AG04450 (cell line): ENCODE measurements at regions of chr1 and their contacts with region 1.

Region 1: DNA sequence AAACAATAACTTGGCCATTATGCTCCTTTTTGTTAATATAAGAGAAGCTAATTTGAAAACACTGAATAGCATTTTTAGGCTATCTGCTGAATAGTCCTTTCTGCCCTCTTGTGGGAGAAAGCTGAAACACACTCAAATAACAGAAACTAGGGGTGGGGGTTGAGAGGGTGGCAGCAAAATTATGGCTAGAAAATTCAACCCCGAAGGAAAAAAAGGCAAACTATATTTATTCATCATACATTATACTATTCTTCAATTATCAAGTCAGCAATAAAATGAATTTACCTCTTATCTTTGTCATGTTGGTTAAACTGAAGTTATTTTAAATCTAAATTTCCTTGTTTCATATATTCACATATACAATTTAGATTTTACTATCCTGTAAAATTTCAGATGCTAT is 255.9 kb downstream of the FAF1 start:
- DNase-seq: peak; percentile 6
- H3K4me3 ChIP-seq: no peak overlapping the region
- H3K27ac ChIP-seq: no peak overlapping the region
- H3K27me3 ChIP-seq: no peaks in the 10 kb centered on the region
- CTCF ChIP-seq: peak; percentile 88

Region 2: GRCh38 chr1:50368179-50369012 is 335.7 kb before region 1 on chr1:
- CTCF ChIA-PET with region 1: interaction called, 32 read pairs
- POLR2A ChIA-PET with region 1: no interaction called
- DNase-seq: no peak
- H3K4me3 ChIP-seq: no peak overlapping the region
- H3K27ac ChIP-seq: no peak overlapping the region
- H3K27me3 ChIP-seq: peaks cover 10% of the 10 kb centered on the region
- CTCF ChIP-seq: peak; percentile 74

Region 3: DNA sequence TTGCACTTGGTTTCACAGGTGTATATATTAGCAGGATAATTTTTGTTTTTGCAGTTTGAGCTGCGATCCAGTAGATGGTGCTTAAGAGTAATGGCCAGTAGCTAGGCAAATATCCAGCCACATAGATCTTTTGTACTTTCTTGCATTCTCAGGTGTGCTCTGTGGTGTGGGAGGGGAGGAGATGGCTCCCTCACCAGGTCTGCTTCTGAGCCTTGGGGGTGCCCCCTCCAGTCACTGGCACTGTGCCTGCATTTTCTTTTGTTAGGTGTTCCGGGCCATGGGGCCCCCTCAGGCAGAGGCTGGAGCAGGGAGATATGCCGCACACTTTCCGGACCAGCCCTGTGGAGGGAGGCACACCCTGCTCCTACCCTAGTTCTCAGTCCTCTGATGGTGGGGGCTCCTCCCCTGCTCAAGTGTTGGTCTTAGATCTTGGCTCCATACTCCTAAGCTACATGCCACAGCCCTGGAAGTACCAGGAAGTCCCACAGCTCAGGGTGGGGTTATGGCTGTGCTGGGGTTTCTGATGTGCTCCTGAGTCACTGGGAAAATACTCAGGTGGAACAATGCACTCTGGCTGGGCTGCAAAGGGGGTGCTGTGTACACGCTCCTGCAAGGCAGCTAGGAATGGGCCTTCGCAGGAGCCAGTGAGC is 83.3 kb before region 1 on chr1:
- CTCF ChIA-PET with region 1: interaction called, 95 read pairs
- POLR2A ChIA-PET with region 1: no interaction called
- DNase-seq: no peak
- H3K4me3 ChIP-seq: no peak overlapping the region
- H3K27ac ChIP-seq: no peak overlapping the region
- H3K27me3 ChIP-seq: no peaks in the 10 kb centered on the region
- CTCF ChIP-seq: peak; percentile 69

Region 4: DNA sequence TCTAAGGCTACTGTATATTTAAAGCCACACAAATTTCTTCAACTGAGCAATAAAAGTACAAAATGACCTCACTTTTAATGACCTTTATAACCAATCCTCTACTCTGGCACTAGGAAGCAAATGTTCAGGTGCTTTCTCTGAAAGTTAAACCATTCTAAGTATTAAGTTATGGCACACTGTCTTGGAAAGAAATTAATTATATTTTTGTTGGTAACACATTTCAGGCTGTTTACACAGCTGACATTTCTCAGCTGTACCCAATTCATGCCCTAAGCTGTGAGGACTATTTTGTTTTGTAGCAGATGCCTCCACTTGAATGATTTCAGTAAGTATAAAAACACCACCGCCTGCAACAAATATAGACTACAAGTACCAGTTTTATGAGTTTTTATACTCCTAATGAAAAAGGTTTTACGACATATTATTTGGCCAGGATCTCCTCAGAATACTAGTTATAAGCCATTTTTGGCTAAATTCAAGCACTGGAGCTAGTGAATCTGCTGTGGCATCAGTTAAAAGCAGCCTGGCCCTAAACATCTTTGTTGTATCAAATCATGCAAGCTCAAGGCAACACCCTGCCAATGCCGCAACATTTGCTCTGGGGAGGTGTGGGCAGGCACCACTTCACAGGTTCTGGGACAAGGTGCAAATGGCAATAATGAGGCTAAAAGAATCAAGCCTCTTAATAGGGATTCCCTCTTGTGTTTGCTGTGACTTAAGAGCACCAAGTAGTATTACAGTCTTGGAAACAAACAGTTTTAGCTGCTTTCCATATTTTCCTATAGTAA is 52.5 kb before region 1 on chr1:
- CTCF ChIA-PET with region 1: interaction called, 12 read pairs
- POLR2A ChIA-PET with region 1: no interaction called
- DNase-seq: no peak
- H3K4me3 ChIP-seq: no peak overlapping the region
- H3K27ac ChIP-seq: no peak overlapping the region
- H3K27me3 ChIP-seq: no peaks in the 10 kb centered on the region
- CTCF ChIP-seq: no peak

Region 5: DNA sequence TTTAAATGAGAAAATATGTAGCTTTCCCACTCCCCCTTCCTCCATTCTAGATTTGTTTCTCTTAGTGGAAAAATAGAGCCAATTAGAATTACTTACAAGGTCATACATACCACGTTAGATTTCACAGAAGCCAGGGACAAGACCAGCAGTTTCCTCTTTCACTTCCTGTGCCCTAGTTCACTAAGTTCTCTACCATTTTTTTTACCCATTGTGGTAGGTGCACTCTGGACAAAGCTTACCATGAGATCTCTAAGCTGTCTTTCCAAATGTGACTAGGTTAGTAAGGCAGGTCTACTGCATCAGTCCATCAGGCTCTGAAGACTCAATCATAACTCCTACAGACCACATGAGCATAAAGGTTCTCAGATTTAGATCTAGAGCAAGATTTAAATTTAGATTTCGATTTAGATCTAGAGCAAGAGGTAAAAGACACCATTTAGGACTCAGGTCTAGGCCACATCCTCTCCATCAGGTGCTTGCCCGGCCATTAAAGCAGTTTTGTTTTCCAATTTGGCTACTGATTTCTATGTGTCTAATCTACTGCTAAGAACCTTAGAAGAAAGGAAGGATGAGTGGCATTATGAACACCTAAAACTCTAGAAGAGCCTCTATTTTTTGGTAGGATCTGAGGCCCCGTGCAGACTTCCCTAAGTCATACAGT is 20.6 kb after region 1 on chr1:
- CTCF ChIA-PET with region 1: interaction called, 15 read pairs
- POLR2A ChIA-PET with region 1: no interaction called
- DNase-seq: no peak
- H3K4me3 ChIP-seq: no peak overlapping the region
- H3K27ac ChIP-seq: no peak overlapping the region
- H3K27me3 ChIP-seq: no peaks in the 10 kb centered on the region
- CTCF ChIP-seq: no peak

Region 6: GRCh38 chr1:51086496-51087271 is 382.6 kb after region 1 on chr1:
- CTCF ChIA-PET with region 1: no interaction called
- POLR2A ChIA-PET with region 1: no interaction called
- DNase-seq: no peak
- H3K4me3 ChIP-seq: no peak overlapping the region
- H3K27ac ChIP-seq: no peak overlapping the region
- H3K27me3 ChIP-seq: peaks cover 8% of the 10 kb centered on the region
- CTCF ChIP-seq: no peak